GM12878 (cell line): ENCODE measurements at regions of chr9 and their contacts with region 1.

Region 1: GRCh38 chr9:123696476-123696875 is 233.4 kb downstream of the DENND1A start:
- DNase-seq: no peak
- ATAC-seq: no peak
- H3K4me3 ChIP-seq: no peak overlapping the region
- H3K27ac ChIP-seq: no peak overlapping the region
- H3K4me1 ChIP-seq: peaks cover 12% of the 10 kb centered on the region; the same call in 1 of the 2 replicates
- H3K27me3 ChIP-seq: no peaks in the 10 kb centered on the region
- CTCF ChIP-seq: no peak
- EP300 ChIP-seq: no peak
- POLR2A ChIP-seq: no peak
- RAD21 ChIP-seq: no peak

Region 2: GRCh38 chr9:123679322-123679987 is 17.0 kb before region 1 on chr9:
- CTCF ChIA-PET with region 1: interaction called, 4 read pairs
- POLR2A ChIA-PET with region 1: interaction called, 8 read pairs
- RAD21 ChIA-PET with region 1: interaction called, 20 read pairs
- SMC1A ChIA-PET with region 1: interaction called, 103 read pairs
- in situ Hi-C with region 1: no loop called
- intact Hi-C with region 1: no loop called
- DNase-seq: peak; percentile 95
- ATAC-seq: peak; percentile 97
- H3K4me3 ChIP-seq: no peak overlapping the region
- H3K27ac ChIP-seq: peak overlapping the region; percentile 72
- H3K4me1 ChIP-seq: peaks cover 31% of the 10 kb centered on the region
- H3K27me3 ChIP-seq: no peaks in the 10 kb centered on the region
- CTCF ChIP-seq: no peak
- EP300 ChIP-seq: peak in 1 of 2 experiments; percentile 82; a peak in 3 of 4 replicates
- POLR2A ChIP-seq: peak; percentile 60; the same call in 1 of the 2 replicates
- RAD21 ChIP-seq: peak; percentile 21; the same call in 1 of the 2 replicates

Region 3: GRCh38 chr9:123686131-123686828 is 10.2 kb before region 1 on chr9:
- CTCF ChIA-PET with region 1: interaction called, 11 read pairs
- POLR2A ChIA-PET with region 1: interaction called, 8 read pairs
- RAD21 ChIA-PET with region 1: interaction called, 20 read pairs
- SMC1A ChIA-PET with region 1: interaction called, 103 read pairs
- in situ Hi-C with region 1: no loop called
- intact Hi-C with region 1: no loop called
- DNase-seq: no peak
- ATAC-seq: peak; percentile 8; the same call in 1 of the 3 replicates
- H3K4me3 ChIP-seq: no peak overlapping the region
- H3K27ac ChIP-seq: no peak overlapping the region
- H3K4me1 ChIP-seq: peaks cover 33% of the 10 kb centered on the region
- H3K27me3 ChIP-seq: no peaks in the 10 kb centered on the region
- CTCF ChIP-seq: no peak
- EP300 ChIP-seq: no peak
- POLR2A ChIP-seq: no peak
- RAD21 ChIP-seq: no peak

Region 4: DNA sequence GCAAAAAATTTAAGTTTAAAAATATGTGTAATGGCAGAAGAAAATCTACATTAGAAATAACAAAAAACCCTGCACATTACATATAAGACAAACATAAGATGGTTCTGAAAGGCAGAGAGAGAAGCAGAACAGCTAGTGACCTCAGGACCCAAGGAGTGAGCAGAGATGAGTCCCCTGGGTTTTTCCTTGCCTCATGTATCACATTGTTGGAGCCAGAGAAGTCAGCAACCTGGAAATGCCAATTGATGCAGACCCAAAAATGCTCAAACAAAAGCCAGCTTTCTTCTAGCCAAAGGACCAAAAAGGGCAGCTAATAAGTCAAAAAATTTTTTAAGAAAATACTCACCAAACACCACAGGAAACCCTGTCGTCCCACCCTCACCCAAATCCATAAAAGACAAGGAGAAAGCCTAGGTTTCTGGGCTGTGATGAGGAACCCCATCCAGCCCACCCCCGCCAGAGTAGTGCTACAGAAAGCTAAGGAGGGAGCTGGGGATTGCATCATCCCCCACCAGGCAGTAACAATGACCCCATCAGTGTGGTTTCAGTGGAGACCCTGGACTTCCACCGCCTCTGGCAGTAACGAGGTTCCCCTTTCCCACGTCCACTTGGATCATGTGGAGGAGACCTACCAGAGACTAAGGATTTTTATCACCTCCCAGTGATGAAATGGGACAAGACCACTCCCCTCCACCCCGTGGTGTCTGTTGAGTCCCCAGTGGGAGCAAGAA is 215.9 kb after region 1 on chr9:
- CTCF ChIA-PET with region 1: no interaction called
- POLR2A ChIA-PET with region 1: no interaction called
- RAD21 ChIA-PET with region 1: no interaction called
- SMC1A ChIA-PET with region 1: no interaction called
- in situ Hi-C with region 1: no loop called
- intact Hi-C with region 1: no loop called
- DNase-seq: no peak
- ATAC-seq: no peak
- H3K4me3 ChIP-seq: no peak overlapping the region
- H3K27ac ChIP-seq: no peak overlapping the region
- H3K4me1 ChIP-seq: peaks cover 3% of the 10 kb centered on the region; the same call in 1 of the 2 replicates
- H3K27me3 ChIP-seq: no peaks in the 10 kb centered on the region
- CTCF ChIP-seq: no peak
- EP300 ChIP-seq: no peak
- POLR2A ChIP-seq: no peak
- RAD21 ChIP-seq: no peak